Psoas muscle (tissue), 8 donors: ENCODE measurements at regions of chr6 and their contacts with region 1.

Region 1: GRCh38 chr6:128725271-128726233 is 157.4 kb upstream of the LAMA2 start:
- DNase-seq: no peak
- ATAC-seq: peak in 1 of 4 donors; percentile 48
- H3K4me3 ChIP-seq: no peak overlapping the region
- H3K27ac ChIP-seq: no peak overlapping the region
- H3K4me1 ChIP-seq: no peaks in the 10 kb centered on the region
- H3K27me3 ChIP-seq: no peaks in the 10 kb centered on the region
- CTCF ChIP-seq: peak; percentile 61

Region 2: GRCh38 chr6:127748290-127748689 is 977.3 kb before region 1 on chr6:
- intact Hi-C with region 1: loop called in 1 of 2 experiments (anchors 10 kb)
- DNase-seq: no peak
- ATAC-seq: no peak
- H3K4me3 ChIP-seq: no peak overlapping the region
- H3K27ac ChIP-seq: no peak overlapping the region
- H3K4me1 ChIP-seq: no peaks in the 10 kb centered on the region
- H3K27me3 ChIP-seq: no peaks in the 10 kb centered on the region
- CTCF ChIP-seq: no peak

Region 3: DNA sequence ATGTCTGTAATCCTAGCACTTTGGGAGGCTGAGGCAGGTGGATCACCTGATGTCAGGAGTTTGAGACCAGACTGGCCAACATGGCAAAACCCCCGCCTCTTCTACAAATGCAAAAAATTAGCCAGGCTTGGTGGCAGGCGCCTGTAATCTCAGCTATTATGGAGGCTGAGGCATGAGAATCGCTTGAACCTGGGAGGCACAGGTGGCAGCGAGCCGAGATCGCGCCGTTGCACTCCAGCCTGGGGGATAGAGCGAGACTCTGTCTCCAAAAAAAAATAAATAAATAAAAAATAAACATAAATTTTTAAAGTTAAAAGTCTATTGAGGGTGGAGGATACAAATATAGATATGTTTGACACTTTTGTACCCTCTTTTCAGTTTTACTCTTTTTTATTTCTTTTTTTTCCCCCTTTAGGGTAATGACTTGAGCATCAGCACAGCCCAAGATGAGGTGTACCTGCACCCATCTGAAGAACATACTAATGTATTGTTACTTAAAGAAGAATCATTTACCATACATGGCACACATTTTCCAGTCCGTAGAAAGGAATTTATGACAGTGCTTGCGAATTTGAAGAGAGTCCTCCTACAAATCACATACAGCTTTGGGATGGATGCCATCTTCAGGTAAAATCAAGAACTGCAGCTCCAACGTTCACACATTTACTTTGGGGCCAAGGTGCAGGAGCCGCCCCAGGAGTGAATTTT is 526.3 kb after region 1 on chr6:
- intact Hi-C with region 1: loop called (anchors 5 to 10 kb)
- DNase-seq: peak in 1 of 2 donors; percentile 14
- ATAC-seq: peak in 3 of 4 donors; percentile 7 to 79 (median 60)
- H3K4me3 ChIP-seq: no peak overlapping the region
- H3K27ac ChIP-seq: no peak overlapping the region
- H3K4me1 ChIP-seq: no peaks in the 10 kb centered on the region
- H3K27me3 ChIP-seq: no peaks in the 10 kb centered on the region
- CTCF ChIP-seq: peak; percentile 78

Region 4: DNA sequence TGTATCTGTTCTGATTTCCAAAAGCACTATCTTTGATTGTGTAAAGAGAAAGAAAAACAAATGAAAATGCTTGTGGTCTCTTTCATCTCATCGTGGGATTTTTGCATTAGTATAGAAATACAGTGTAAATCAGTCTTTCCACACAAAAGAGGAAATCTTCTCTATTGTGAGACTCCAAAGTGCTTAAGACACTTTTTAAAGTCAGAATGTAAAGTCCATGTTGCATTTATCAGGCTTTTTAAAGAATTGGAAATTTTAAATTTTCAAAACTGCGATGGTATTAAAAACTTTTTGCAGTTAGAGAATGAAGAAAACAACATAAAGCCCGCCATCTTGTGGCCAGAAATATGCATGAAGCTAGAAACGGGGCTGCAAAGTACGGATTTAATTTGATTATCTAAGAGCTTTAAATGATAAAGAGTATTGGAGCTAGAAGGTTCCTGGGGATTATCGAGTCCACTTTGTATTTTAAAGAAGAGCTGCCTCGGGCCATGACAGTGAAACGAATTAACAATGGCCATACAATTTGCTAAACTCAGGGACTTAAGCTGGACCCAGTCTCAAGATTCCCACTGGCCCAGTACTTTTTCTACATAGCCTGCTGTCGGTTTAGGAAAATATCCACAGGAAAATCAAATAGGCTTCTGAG is 644.8 kb after region 1 on chr6:
- intact Hi-C with region 1: loop called (anchors 5 to 10 kb)
- DNase-seq: no peak
- ATAC-seq: peak in 1 of 4 donors; percentile 62
- H3K4me3 ChIP-seq: no peak overlapping the region
- H3K27ac ChIP-seq: no peak overlapping the region
- H3K4me1 ChIP-seq: no peaks in the 10 kb centered on the region
- H3K27me3 ChIP-seq: no peaks in the 10 kb centered on the region
- CTCF ChIP-seq: peak; percentile 60